BJ (cell line): ENCODE measurements at regions of chr3 and their contacts with region 1.

Region 1: GRCh38 chr3:13623099-13623654 is 74.3 kb downstream of the FBLN2 start:
- DNase-seq: no peak
- H3K4me3 ChIP-seq: no peak overlapping the region
- H3K27me3 ChIP-seq: no peaks in the 10 kb centered on the region
- CTCF ChIP-seq: no peak

Region 2: GRCh38 chr3:13301286-13301987 is 321.7 kb before region 1 on chr3:
- CTCF ChIA-PET with region 1: no interaction called
- POLR2A ChIA-PET with region 1: no interaction called
- DNase-seq: no peak
- H3K4me3 ChIP-seq: no peak overlapping the region
- H3K27me3 ChIP-seq: no peaks in the 10 kb centered on the region
- CTCF ChIP-seq: no peak

Region 3: DNA sequence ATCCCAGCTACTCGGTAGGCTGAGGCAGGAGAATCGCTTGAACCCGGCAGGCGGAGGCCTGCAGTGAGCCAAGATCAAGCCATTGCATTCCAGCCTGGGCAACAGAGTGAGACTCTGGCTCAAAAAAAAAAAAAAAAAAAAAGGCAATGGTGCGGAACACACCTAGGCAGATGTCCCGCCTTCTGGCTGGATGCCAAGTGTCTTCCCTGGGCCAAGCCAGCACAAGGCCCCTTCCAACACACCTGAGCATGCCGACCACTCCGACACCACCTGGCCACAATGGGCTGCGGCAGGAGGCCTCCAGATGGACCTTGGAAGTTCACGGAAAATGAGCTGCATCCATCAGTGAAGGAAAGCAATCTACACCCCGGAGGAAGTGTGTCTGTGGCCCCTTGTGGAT is 222.0 kb before region 1 on chr3:
- CTCF ChIA-PET with region 1: no interaction called
- POLR2A ChIA-PET with region 1: no interaction called
- DNase-seq: no peak
- H3K4me3 ChIP-seq: no peak overlapping the region
- H3K27me3 ChIP-seq: no peaks in the 10 kb centered on the region
- CTCF ChIP-seq: no peak

Region 4: DNA sequence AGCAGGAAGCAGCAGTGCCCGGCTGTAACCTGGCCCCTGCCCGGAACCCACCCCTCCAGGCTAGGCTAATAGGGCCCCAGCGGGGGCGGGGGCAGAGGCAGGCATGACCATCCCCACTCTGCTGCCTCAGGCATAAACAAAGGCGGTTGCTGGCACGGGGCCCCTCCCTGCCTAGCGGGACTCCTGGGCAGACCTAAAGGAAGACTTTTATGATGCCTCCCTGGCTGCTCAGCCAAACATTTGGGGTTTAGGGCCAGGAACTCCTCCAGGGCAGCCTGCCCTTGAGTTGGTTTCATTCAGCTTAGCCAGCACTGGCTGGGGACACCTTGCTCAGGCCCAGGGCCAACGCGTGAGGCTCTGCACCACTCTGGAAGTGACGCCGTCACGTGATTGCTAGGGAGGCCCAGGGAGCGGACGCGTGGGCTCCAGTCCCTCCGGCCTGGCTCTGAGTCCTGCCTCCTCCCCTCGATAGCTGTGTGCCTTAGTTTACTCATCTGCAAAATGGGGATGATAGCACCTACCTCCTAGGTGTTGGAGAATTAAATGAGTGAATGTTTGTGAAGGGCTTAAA is 115.3 kb before region 1 on chr3:
- CTCF ChIA-PET with region 1: no interaction called
- POLR2A ChIA-PET with region 1: interaction called, 11 read pairs
- DNase-seq: no peak
- H3K4me3 ChIP-seq: no peak overlapping the region
- H3K27me3 ChIP-seq: no peaks in the 10 kb centered on the region
- CTCF ChIP-seq: no peak

Region 5: GRCh38 chr3:13607821-13608505 is 15.2 kb before region 1 on chr3:
- CTCF ChIA-PET with region 1: no interaction called
- POLR2A ChIA-PET with region 1: no interaction called
- DNase-seq: no peak
- H3K4me3 ChIP-seq: no peak overlapping the region
- H3K27me3 ChIP-seq: no peaks in the 10 kb centered on the region
- CTCF ChIP-seq: no peak